Activated naive CD4-positive, alpha-beta T cell treated with anti-CD3 and anti-CD28 coated beads for 36 hours (primary cell): ENCODE measurements at regions of chr5 and their contacts with region 1.

Region 1: DNA sequence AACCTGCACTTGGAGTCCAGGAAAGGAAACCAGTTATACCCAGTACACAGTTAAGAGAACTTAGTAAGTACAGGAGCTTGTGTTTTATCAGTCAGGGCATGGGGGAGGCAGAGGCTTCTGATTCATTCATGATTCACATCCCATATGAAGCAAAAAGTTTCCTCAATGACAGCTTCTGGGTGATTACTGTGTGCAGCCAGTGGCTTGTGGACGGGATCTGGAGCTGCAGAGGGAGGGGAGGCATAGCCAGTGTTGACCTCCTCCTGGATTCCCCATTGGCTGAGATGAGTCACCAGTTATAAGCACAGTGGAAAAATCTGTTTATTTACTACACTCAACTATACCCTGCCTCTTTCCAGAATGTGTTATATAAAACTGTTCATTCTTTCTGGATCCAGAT is 17.7 kb downstream of the IL31RA start:
- DNase-seq: peak; percentile 80
- H3K4me3 Mint-ChIP-seq: no peak overlapping the region
- H3K27ac Mint-ChIP-seq: no peak overlapping the region
- H3K4me1 Mint-ChIP-seq: peaks cover 28% of the 10 kb centered on the region
- H3K27me3 Mint-ChIP-seq: no peaks in the 10 kb centered on the region

Region 2: GRCh38 chr5:55307383-55308253 is 561.2 kb before region 1 on chr5 and contains the starts of genes DHX29 and MTREX:
- CTCF ChIA-PET with region 1: no interaction called
- intact Hi-C with region 1: loop called (anchors 5 kb)
- DNase-seq: peak; percentile 94
- H3K4me3 Mint-ChIP-seq: no peak within 1 kb of the TSS
- H3K27ac Mint-ChIP-seq: no peak within 1 kb of the TSS
- H3K4me1 Mint-ChIP-seq: peaks cover 33% of the 10 kb centered on the region
- H3K27me3 Mint-ChIP-seq: no peaks in the 10 kb centered on the region
- total RNA-seq, gene DHX29: 11.0 to 11.1 TPM
- total RNA-seq, gene MTREX: 76.1 to 79.7 TPM

Region 3: GRCh38 chr5:55421074-55421529 is 447.7 kb before region 1 on chr5:
- CTCF ChIA-PET with region 1: interaction called, 5 read pairs
- intact Hi-C with region 1: loop called (anchors 2 kb)
- DNase-seq: peak; percentile 49
- H3K4me3 Mint-ChIP-seq: no peak overlapping the region
- H3K27ac Mint-ChIP-seq: no peak overlapping the region
- H3K4me1 Mint-ChIP-seq: peaks cover 33% of the 10 kb centered on the region
- H3K27me3 Mint-ChIP-seq: no peaks in the 10 kb centered on the region

Region 4: GRCh38 chr5:55823142-55823796 is 45.6 kb before region 1 on chr5:
- CTCF ChIA-PET with region 1: interaction called, 4 read pairs
- intact Hi-C with region 1: loop called (anchors 1 kb)
- DNase-seq: no peak
- H3K4me3 Mint-ChIP-seq: no peak overlapping the region
- H3K27ac Mint-ChIP-seq: no peak overlapping the region
- H3K4me1 Mint-ChIP-seq: peaks cover 16% of the 10 kb centered on the region
- H3K27me3 Mint-ChIP-seq: peaks cover 48% of the 10 kb centered on the region

Region 5: DNA sequence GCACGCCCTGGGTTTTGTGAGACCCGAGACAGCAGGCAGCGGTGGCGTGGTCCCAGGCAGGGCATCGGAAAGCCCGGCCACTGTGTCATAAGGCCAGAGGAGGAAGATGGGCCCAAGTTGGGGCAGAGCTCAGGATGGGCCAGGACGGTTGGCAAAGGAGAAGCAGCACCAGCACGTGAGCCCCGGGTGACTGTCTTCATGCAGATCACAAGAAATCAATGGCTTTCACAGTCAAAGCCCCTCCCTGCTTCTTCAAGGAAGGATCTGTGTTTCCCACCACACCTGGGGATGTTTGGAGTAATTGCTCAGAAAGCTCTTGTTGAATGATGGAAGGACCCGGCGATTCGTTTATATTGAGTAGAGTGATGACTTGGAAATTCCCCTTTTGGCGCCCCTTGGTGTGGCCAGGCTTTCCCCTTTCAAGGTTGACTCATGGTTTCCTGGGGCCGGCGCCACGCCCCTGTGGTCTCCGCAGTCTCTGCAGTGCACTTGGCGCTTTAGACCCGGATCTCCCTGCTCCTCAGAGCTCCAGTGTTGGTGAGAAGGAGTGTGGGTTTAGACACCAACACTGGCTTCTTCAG is 34.4 kb after region 1 on chr5:
- CTCF ChIA-PET with region 1: no interaction called
- intact Hi-C with region 1: loop called (anchors 1 kb)
- DNase-seq: peak; percentile 84
- H3K4me3 Mint-ChIP-seq: no peak overlapping the region
- H3K27ac Mint-ChIP-seq: no peak overlapping the region
- H3K4me1 Mint-ChIP-seq: peaks cover 25% of the 10 kb centered on the region
- H3K27me3 Mint-ChIP-seq: peaks cover 4% of the 10 kb centered on the region

Region 6: DNA sequence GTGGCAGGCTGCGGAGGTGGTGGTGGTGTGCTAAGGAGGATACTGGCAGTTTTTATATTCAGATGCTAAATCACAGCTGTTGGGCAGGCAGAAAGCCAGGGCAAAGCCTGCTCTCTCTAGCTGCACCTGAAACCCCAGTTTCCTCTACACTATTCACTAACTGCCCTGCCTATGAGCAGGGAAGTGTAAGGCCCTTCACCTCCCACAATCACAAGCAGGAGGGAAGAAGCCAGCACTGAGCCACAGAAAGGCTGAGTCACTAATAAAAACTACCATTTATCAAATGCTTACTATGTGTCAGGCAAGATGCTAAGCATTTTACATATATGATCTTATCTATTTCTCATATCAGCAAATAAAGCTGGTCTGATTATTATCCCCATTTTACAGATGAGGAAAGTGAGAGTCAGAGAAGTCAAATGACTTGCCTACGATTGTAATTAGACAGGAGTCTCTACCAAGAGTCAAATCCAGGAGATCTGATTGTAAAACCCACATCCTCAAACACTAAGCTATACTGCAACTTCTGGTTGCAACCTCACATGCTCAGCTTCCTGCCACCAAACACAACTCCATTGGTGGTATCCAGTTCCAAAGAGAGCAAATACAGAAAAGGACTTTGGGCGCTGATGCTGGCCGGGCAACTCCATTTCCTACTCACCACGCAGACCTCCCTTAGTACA is 143.6 kb after region 1 on chr5:
- CTCF ChIA-PET with region 1: no interaction called
- intact Hi-C with region 1: loop called (anchors 5 kb)
- DNase-seq: peak; percentile 66
- H3K4me3 Mint-ChIP-seq: peak overlapping the region; percentile 33
- H3K27ac Mint-ChIP-seq: peak overlapping the region; percentile 77
- H3K4me1 Mint-ChIP-seq: peaks cover 41% of the 10 kb centered on the region
- H3K27me3 Mint-ChIP-seq: no peaks in the 10 kb centered on the region